Head of caudate nucleus (tissue), 42 donors: ENCODE measurements at regions of chr20 and their contacts with region 1.

Region 1: DNA sequence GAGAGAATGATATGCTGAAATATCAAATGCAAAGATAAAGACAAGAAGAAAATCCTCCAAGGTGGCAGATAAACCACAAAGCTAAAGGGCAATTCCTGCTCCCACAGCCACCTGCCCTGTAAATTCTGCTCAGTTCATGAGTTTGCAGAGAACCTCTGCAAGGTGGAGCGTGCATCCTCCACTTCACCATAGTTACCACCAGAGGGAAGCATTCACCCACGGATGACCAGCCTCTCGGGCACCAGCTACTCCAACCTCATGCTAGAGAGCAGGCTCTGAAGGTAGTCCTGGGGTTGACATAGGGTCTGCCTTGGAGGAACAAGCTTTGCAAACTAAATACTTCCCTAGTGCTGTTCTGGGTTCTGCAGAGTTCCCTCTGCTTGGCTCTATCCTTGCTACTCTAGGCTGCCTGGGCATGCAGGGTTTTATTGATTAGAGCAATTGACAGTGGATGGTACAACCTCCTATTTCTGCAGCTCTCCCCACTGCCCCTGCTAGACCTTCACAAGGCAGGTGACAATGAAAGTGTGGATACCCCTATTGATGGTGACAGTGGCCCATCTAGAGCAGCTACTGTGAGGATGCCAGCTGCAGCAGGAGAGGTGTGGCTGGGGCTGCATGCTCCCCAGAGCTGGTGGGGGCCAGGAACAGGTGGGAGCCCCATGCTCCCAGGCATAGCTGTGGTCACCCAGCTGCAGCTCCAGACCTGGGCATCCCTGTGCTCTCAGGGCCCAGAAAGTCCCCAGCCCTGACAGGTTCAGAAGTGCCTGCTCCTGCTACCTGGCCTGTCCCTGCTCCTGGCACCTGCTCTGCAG is 51.1 kb downstream of the GGTLC1 start:
- DNase-seq: peak; percentile 61 to 90 (median 79)

Region 2: DNA sequence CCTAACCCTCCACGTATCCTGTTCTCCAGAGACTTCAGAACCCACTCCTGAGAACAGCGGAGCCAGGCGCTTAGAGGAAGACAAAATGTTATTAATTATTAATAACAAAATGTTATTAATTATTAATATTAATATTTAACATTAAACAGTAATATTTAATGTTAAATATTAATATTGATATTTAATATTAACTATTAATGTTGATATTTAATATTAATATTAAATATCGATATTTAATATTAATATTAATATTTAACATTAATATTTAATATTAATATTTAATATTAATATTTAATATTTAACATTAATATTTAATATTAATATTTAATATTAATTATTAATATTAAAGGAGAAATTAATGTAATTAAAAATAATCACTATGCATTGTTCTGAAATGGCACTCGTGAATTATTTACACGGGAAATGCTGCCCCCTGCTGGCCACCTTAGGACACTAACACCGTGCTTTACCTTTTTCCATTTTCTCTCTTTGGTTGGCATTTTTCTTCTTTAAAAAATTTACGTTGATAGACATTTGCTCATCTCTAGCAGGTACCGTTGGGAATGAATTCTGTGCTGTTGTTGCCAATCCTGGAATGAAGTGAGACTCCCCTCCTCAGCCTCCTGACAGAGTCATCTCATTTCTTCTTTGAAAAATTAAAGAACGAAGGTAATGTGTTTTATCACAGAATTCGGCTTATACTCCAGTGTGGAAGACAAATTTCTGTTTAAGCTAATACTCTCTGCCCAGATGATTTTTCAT is 58.6 kb after region 1 on chr20:
- intact Hi-C with region 1: loop called (anchors 5 kb)
- DNase-seq: peak; percentile 35 to 89 (median 74)

Region 3: GRCh38 chr20:24934101-24934661 is 996.7 kb after region 1 on chr20:
- intact Hi-C with region 1: loop called (anchors 10 kb)
- DNase-seq: peak in 3 of 42 donors; percentile 4 to 31 (median 14)